Activated naive CD4-positive, alpha-beta T cell treated with anti-CD3 and anti-CD28 coated beads for 36 hours (primary cell): ENCODE measurements at regions of chr5 and their contacts with region 1.

Region 1: DNA sequence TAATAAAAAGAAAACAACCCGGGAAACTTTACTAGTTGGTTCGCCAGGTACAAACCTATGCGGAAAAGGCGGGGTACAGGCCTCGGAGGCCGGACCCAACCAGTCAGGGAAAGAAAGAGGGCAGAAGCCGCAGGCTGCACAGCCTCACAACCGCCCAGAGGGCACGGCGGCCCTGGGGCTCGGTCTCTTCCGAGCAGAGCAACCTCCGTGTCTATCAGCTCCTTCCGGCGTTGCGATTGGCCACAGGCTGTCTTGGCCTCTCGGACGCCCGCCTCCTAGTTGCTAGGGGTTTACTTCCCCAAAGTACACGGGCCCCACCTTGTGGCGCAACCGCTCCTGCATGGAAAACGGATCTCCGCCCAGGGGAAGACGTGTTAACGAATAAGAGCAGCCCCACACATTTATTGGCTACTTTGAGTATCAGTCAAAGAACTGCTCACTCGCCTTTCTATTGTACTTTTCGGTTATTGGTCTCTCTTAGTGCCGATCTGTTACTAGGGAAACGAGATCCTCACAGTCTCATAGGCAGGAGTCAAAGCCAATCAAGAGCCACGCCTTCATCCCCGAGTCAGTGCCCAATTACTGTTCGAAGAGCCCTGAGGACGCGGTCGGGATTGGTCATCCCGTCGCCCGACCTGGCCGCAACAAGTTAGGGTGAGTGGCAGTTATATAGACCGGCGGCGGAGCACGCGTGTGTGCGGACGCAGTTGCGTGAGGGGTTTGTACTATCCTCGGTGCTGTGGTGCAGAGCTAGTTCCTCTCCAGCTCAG is at the start of gene G3BP1:
- DNase-seq: peak; percentile 100
- H3K4me3 Mint-ChIP-seq: peak within 1 kb of the TSS; percentile 77
- H3K27ac Mint-ChIP-seq: peak within 1 kb of the TSS; percentile 70
- H3K4me1 Mint-ChIP-seq: peaks cover 33% of the 10 kb centered on the region
- H3K27me3 Mint-ChIP-seq: no peaks in the 10 kb centered on the region
- total RNA-seq, gene G3BP1: 220 to 241 TPM

Region 2: DNA sequence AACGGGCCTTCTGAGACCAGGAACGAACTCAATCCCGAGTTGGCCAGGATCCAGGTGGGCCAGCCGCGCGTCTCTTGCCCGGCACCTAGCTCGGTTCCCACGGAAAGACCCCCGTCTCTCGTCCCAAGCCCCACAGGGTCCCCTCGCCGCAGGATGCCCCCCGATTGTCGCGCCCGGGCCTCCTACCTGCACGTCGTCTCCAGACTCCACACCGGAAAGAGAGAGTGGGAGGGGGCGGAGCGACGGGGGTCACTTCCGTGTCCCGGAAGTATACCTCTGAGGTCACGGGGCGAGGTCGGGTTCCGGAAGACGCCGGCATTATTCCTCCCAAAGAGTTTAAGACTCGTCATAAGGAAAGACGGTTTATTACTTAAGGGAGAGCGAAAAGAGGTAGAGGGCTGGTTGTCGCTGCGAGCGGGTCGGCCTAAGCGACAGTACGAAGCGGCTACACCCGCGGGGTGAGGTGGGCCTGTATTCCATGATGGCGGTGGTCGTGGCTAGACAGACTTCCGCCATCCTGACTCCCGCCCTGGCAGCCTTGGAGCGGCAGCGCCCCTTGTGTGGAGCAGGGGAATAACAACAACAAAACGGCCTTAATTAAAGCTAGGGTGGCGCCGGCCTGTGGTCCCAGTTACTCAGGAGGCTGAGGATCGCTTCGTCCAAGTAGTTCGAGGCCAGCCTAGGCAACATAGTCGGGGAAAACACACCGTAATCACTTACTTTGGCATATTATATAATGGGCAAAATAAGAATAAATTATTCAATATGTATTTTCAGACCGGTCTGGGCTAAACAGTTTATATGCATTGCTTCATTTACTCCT is 1321.7 kb before region 1 on chr5 and contains the start of gene RPS14:
- CTCF ChIA-PET with region 1: no interaction called
- intact Hi-C with region 1: loop called (anchors 10 kb)
- DNase-seq: peak; percentile 97
- H3K4me3 Mint-ChIP-seq: peak within 1 kb of the TSS; percentile 93
- H3K27ac Mint-ChIP-seq: peak within 1 kb of the TSS; percentile 99
- H3K4me1 Mint-ChIP-seq: peaks cover 33% of the 10 kb centered on the region
- H3K27me3 Mint-ChIP-seq: no peaks in the 10 kb centered on the region
- total RNA-seq, gene RPS14: 4,594 to 4,738 TPM

Region 3: DNA sequence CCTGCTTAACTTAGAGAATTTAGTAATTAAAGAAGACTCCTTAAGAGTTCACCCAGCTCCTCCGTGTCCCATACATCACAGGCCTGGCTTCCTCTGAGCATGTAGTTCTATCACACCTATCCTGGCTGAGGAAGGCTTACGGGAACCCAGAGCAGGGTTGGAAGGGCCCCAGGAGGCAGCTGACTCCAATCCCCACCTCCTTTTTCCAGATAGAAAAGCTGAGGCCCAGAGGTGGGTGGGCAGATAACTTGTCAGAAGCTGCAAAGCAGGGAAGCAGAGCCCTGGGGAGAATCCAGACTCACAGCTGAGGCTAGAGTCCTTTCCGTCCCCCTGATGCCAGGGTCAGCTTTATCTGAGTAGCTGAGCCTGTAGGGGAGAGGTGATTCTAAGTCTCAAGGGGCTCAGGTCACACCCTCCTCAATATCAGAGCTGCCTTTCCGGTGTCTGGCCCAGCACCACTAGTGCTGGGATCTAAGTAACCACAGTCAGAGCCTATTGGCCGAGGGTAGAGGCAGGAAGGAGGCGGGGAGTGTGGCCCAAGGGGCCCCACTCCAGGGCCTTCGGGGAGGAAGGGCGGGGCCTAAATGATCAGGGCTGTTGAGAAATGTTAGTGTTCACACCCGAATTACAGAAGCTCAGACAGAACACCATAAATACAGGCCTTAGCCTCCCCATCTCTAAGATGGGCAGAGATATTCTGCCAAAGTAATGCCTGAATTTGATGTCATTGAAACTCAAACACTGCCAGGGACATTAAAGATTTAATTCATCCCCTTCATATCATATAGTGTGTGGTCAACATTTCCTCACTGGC is 557.4 kb before region 1 on chr5:
- CTCF ChIA-PET with region 1: no interaction called
- intact Hi-C with region 1: loop called (anchors 5 kb)
- DNase-seq: peak; percentile 95
- H3K4me3 Mint-ChIP-seq: peak overlapping the region; percentile 83
- H3K27ac Mint-ChIP-seq: peak overlapping the region; percentile 98
- H3K4me1 Mint-ChIP-seq: peaks cover 76% of the 10 kb centered on the region
- H3K27me3 Mint-ChIP-seq: no peaks in the 10 kb centered on the region

Region 4: DNA sequence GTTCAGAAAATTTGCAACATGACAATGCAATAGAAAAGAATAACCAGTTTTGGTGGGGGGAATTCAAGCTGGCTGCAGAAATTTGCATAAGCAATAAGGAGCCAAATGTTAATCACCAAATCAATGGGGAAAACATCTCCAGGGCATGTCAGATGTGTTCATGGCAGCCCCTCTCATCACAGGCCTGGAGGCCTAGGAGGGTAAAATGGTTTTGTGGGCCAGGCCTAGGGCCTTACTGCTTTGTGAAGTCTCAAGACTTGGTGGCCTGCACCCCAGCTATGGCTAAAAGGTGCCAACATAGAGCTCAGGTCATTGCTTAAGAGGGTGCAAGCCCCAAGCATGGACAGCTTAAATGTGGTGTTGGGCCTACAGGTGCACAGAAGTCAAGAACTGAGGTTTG is 353.7 kb before region 1 on chr5:
- CTCF ChIA-PET with region 1: no interaction called
- intact Hi-C with region 1: no loop called
- DNase-seq: no peak
- H3K4me3 Mint-ChIP-seq: no peak overlapping the region
- H3K27ac Mint-ChIP-seq: no peak overlapping the region
- H3K4me1 Mint-ChIP-seq: no peaks in the 10 kb centered on the region
- H3K27me3 Mint-ChIP-seq: peaks cover 10% of the 10 kb centered on the region

Region 5: GRCh38 chr5:151463137-151464029 is 308.1 kb before region 1 on chr5:
- CTCF ChIA-PET with region 1: no interaction called
- intact Hi-C with region 1: no loop called
- DNase-seq: no peak
- H3K4me3 Mint-ChIP-seq: no peak overlapping the region
- H3K27ac Mint-ChIP-seq: no peak overlapping the region
- H3K4me1 Mint-ChIP-seq: no peaks in the 10 kb centered on the region
- H3K27me3 Mint-ChIP-seq: no peaks in the 10 kb centered on the region

Region 6: DNA sequence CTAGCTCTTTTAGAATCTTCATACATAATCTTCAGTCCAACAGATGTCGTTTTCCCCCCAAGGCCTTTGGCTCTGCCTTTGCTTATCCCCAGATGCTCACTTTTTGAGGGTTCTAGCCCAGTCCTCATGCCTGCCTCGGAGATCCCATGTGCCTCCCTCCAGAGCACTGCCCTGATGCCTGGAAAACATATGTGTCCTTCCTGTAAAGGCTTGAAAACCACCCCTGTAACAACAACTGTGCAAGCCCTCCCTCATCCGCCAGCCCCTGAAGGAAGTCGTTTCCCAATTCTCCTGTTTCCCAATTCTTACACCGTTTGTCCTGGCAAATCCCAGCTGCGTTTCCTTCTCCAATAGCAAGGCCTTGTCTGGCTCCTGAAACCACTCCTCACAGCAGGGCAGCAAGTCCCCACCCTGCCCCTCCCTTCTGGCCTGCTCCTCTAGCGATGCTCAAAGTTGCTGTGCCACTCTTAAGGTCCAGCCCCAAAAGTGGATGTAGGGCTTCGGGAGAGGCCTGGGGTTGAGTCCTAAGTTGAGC is 271.9 kb before region 1 on chr5:
- CTCF ChIA-PET with region 1: no interaction called
- intact Hi-C with region 1: loop called (anchors 1 kb)
- DNase-seq: no peak
- H3K4me3 Mint-ChIP-seq: no peak overlapping the region
- H3K27ac Mint-ChIP-seq: no peak overlapping the region
- H3K4me1 Mint-ChIP-seq: peaks cover 4% of the 10 kb centered on the region
- H3K27me3 Mint-ChIP-seq: no peaks in the 10 kb centered on the region

Region 7: DNA sequence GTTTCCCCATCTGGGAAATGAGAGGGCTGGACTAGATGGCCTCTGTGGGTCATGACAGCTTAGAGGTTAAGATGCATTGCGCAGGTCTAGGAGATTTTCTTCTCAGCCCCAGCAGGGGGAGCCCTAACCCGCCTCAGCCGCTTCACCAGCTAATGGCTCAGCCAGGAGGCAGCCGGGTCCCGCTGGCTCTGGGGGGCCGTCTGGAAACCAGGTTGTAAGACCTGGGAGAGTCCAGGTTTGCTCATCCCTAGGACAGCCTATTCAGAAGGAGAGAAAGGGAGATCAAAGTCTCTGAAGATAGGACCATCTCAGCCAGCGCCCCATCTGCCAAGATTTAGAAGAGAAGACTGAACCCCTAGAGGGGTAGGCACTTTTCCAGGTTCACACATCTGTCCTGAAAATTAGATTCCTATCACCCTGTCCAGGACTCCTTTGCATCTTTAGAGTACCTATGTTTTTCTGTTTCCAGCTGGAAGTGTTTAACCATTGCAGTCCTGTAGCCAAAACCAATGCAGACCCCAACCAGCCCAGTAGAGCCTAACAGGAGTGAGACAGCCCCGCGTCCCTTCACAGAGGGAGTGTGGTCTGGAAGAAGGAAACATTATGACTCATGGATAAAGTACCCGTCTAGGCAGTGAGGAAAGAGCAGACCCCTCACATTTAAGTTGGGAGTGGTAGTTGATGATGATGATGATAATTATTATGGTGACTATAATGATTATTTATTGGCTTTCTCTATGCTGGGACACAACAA is 112.3 kb before region 1 on chr5:
- CTCF ChIA-PET with region 1: interaction called, 34 read pairs
- intact Hi-C with region 1: loop called (anchors 1 kb)
- DNase-seq: peak; percentile 87
- H3K4me3 Mint-ChIP-seq: no peak overlapping the region
- H3K27ac Mint-ChIP-seq: no peak overlapping the region
- H3K4me1 Mint-ChIP-seq: peaks cover 17% of the 10 kb centered on the region
- H3K27me3 Mint-ChIP-seq: no peaks in the 10 kb centered on the region

Region 8: GRCh38 chr5:151699071-151699901 is 72.2 kb before region 1 on chr5:
- CTCF ChIA-PET with region 1: no interaction called
- intact Hi-C with region 1: no loop called
- DNase-seq: no peak
- H3K4me3 Mint-ChIP-seq: no peak overlapping the region
- H3K27ac Mint-ChIP-seq: no peak overlapping the region
- H3K4me1 Mint-ChIP-seq: no peaks in the 10 kb centered on the region
- H3K27me3 Mint-ChIP-seq: no peaks in the 10 kb centered on the region

Region 9: DNA sequence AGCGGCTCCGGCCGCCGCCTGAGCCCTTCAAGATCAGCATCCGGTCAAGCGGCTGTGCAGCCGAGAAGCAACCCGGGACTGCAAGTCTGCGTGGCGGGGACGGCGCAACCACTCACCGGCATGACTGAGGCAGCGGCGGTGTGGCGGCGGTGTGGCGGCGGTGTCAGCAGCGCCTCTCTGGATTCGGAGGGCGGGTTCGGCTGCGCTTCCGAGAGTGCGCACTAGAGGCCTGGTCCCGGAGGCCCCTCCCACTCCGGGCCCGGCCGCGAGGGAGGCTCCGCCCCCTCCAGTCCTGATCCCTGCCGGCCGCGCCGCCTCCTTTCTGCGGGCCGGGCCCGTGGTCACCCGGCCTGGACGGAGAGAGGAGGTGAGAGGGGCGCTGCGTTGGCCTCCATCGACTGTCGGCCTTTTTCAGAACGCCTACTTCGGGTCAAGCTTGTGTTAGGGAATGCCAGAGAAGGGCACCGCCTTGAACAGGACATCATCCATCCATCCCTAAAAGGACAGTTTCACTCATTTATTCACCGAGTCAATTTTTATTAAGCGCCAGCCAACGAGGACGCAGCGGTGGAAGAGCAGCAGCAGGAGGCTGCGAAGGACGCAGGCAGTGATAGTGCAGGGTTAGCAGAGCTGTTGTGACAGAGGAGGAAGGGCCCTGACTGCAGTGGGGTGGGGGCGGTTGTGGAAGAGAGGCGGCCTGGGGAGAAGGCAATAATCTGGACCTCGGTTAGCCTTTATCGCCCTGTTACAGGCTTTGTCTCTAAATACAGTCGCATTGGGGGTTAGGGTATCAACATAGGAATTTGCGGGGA is 12.8 kb before region 1 on chr5 and contains the start of gene ATOX1:
- CTCF ChIA-PET with region 1: interaction called, 10 read pairs
- intact Hi-C with region 1: loop called (anchors 1 kb)
- DNase-seq: peak; percentile 91
- H3K4me3 Mint-ChIP-seq: peak within 1 kb of the TSS; percentile 81
- H3K27ac Mint-ChIP-seq: peak within 1 kb of the TSS; percentile 78
- H3K4me1 Mint-ChIP-seq: peaks cover 30% of the 10 kb centered on the region
- H3K27me3 Mint-ChIP-seq: no peaks in the 10 kb centered on the region
- total RNA-seq, gene ATOX1: 87.7 to 92.6 TPM

Region 10: GRCh38 chr5:151868451-151868850 is 97.0 kb after region 1 on chr5:
- CTCF ChIA-PET with region 1: no interaction called
- intact Hi-C with region 1: no loop called
- DNase-seq: no peak
- H3K4me3 Mint-ChIP-seq: no peak overlapping the region
- H3K27ac Mint-ChIP-seq: no peak overlapping the region
- H3K4me1 Mint-ChIP-seq: no peaks in the 10 kb centered on the region
- H3K27me3 Mint-ChIP-seq: no peaks in the 10 kb centered on the region